Aorta (tissue), 5 donors: ENCODE measurements at regions of chr5 and their contacts with region 1.

Region 1: GRCh38 chr5:78547731-78548615 is 100.6 kb downstream of the LHFPL2 start:
- DNase-seq: peak; percentile 94 to 95
- ATAC-seq: peak; percentile 89
- H3K4me3 ChIP-seq: no peak overlapping the region
- H3K27ac ChIP-seq: peak overlapping the region; percentile 29 to 95
- H3K4me1 ChIP-seq: peaks cover 0 to 7% of the 10 kb centered on the region in 2 donors
- H3K27me3 ChIP-seq: no peaks in the 10 kb centered on the region

Region 2: GRCh38 chr5:78594610-78595457 is 46.9 kb after region 1 on chr5:
- intact Hi-C with region 1: loop called in 1 of 2 experiments (anchors 5 kb)
- DNase-seq: peak in 1 of 2 donors; percentile 62
- ATAC-seq: peak; percentile 90
- H3K4me3 ChIP-seq: no peak overlapping the region
- H3K27ac ChIP-seq: peak overlapping the region; percentile 93
- H3K4me1 ChIP-seq: peaks cover 10 to 16% of the 10 kb centered on the region in 2 donors
- H3K27me3 ChIP-seq: no peaks in the 10 kb centered on the region

Region 3: DNA sequence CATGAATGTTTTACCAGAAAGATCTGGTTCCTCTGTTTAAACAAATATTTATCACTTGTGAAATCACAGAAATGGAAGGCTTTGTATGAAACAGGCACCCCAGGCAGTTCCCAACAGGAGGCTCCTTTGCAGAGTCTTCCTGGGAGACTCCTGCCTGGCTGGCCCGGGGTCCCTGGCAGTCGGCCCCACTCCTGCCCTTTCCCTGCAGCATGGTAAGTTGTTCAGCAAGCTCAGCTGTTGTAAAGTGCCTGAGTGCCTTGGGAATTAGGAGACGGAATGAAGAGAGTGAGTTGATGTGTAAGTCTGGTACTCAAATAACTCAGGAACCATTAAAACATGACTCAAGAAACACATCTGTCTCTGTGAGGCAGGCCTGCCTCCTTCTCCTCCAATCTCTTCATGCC is 118.1 kb after region 1 on chr5:
- intact Hi-C with region 1: no loop called
- DNase-seq: no peak
- ATAC-seq: no peak
- H3K4me3 ChIP-seq: no peak overlapping the region
- H3K27ac ChIP-seq: no peak overlapping the region
- H3K4me1 ChIP-seq: no peaks in the 10 kb centered on the region
- H3K27me3 ChIP-seq: no peaks in the 10 kb centered on the region

Region 4: DNA sequence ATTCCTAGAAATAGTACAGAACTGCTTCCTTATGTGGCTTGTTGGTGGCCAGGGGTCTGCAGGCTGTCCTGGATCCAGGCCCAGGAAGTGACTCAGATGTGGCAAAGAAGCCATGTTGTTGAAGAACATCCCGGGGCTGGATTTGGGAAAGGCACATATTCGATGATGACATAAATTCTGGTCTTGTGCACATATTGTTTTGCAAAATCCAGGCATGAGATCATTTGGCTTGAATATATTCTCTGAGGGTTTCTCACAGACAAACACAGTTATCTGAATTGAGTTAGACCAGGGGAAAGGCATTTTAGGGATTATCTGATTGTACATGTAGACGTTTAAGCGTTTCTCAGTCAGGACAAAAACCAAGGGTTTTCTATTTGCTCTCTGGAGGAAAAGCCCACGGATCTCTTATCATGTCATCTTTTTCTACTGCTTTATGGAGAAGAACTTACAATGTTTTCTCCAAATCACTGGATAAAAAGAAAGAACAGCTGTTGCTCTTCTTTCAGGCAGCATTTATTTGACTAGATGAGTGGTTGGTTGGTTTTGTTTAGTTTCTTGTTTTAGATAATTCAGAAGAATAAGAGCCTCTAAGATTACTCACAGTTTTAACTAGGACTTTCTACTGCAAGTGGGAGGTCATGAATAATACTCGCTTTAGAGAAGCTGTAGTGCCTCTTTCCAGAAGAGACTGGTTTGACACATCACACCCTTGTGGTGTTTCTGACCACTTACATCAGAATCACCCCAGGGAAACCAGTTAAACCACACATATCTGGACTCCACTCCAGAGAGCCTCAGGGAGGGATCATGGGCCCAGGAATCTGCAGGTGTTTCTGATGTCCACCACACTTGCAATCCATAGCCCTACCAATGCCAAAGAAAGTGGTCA is 130.1 kb after region 1 on chr5:
- intact Hi-C with region 1: no loop called
- DNase-seq: peak; percentile 76 to 78
- ATAC-seq: peak; percentile 90
- H3K4me3 ChIP-seq: no peak overlapping the region
- H3K27ac ChIP-seq: no peak overlapping the region
- H3K4me1 ChIP-seq: peaks cover 0 to 5% of the 10 kb centered on the region in 2 donors
- H3K27me3 ChIP-seq: no peaks in the 10 kb centered on the region